ENCODE measurements at regions of chr18 and their contacts with region 1.

Region 1: GRCh38 chr18:21004726-21005125 is 106.9 kb downstream of the ROCK1 start:
- DNase-seq: no peak
- ATAC-seq: peak; percentile 97

Region 2: GRCh38 chr18:20975077-20975476 is 29.6 kb before region 1 on chr18:
- intact Hi-C with region 1: no loop called
- DNase-seq: no peak
- ATAC-seq: no peak

Region 3: DNA sequence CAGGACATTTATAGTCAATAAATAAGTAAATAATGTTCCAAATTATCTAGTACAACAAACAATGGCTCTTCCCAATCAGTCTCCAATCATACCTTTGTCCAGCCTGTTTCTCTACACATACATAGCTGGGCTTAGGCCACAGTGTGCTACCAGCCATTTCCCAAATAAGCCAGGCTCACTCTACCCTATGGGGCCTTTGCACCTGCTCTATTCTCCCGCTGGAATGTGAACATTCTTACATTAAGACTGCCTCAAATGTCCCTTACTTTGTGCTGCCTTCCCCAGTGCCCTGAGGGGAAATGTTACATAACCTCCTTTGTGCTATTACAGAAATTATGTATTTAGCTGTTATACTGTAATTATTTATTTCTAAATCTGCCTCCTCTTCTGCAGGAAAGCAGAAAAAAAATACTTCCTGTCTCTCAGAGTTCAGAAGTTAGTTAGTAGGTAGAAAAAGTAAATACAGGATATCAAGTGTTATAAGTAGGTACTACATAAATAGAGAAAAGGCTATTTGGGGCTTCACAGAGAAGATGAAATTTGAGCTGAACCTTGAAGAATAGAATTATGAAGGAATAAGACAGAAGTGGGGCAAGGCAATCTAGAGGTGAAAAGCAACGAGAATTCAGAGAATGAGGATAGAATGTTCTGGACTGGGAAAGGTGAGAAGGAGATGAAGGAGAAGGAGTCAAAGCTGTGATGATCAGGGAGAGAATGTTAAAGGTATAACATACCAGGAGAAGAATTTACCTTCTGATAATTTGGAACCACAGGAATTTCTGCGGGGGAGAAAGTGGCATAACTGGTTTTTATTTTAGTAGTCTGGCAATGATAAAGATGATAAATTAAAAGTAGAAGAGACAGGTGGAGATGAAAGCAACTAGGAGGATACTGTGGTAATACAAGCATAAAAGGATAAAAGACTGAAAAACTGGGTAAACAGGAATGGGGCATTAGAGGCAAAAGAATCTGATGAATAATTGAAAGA is 69.9 kb after region 1 on chr18:
- intact Hi-C with region 1: no loop called
- DNase-seq: no peak
- ATAC-seq: peak; percentile 15

Region 4: DNA sequence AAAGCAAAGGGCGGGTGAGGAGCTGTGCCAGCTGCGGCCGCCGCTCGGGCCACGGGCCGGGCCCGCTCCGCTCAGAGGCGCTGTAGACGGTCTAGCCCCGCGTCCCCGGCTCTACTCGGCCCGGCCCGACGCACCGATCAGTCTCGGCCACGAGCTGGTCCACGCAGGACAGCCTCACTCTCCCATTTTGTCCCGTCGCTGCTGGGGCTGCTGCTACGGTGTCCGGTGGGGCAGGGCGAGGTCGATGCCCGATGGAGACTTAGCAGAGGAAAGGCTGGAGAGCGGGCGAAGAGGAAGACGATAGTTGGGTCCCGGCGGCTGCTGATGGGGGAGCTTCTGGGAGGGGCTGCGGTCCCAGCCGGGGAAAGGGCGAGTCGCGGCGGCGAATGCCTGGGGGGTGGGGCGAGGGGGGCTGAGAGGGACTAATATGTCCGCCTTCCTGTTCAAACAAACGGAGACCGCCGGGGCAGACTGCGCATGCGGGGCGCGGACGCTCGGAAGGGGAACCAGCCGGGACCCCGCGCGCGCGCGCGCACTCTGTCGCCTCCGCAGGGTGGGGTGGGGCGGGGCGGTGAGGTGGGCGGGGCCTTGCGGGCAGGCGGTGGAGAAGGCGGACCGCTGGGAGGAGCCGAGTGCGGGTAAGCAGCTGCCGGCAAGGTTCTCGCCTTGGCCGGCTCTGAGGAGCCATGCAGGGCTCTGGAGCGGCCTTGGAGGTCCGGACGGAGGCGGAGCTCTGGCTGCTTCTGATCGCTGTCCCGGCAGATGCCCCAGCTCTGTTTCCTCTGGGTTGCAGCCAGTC is 106.8 kb after region 1 on chr18 and contains the start of gene ROCK1:
- intact Hi-C with region 1: loop called (anchors 10 kb)
- DNase-seq: peak; percentile 100
- ATAC-seq: peak; percentile 96
- total RNA-seq, gene ROCK1: 34.7 TPM

Region 5: GRCh38 chr18:21444465-21445023 is 439.8 kb after region 1 on chr18:
- intact Hi-C with region 1: no loop called
- DNase-seq: no peak
- ATAC-seq: peak; percentile 70

Measured in left ventricle myocardium superior (tissue), 1 donor.